GM10248 (cell line): ENCODE measurements at regions of chr9 and their contacts with region 1.

Region 1: DNA sequence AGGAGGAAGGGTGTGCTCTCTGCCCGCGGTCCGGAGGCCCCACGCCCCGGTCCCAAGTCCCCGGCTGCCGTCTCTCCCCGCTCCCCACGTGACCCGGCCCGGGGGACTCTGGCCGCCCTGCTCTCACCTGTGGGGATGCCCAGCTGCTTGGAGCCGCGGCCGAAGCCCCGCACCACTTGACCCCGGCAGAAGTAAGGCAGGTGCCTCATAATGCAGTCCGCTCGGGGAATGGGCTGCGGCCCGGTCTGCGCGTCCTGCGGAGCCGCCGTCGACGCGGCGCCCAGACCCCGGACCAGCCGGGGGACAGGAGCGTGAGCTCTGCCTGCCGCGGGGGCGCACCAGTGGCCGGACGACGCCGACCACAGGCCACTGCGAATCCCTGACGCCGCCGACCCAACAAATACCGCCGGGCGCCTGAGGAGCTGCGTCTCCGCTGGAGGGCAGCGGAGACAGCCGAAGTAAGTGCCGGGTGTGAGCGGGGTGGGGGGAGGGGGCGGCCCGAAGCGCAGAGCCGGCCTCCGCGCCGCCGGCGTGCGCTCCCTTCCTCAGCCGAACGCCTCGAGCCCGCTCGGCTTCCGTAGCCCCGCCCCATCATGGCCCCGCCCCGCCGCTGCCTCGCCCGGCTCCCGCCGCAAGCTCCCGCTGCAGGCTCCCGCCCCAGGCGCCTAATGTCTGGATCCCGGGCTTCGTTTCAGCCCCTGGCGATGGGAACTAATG is at the start of gene RFK:
- DNase-seq: peak; percentile 95
- CTCF ChIP-seq: peak; percentile 67

Region 2: DNA sequence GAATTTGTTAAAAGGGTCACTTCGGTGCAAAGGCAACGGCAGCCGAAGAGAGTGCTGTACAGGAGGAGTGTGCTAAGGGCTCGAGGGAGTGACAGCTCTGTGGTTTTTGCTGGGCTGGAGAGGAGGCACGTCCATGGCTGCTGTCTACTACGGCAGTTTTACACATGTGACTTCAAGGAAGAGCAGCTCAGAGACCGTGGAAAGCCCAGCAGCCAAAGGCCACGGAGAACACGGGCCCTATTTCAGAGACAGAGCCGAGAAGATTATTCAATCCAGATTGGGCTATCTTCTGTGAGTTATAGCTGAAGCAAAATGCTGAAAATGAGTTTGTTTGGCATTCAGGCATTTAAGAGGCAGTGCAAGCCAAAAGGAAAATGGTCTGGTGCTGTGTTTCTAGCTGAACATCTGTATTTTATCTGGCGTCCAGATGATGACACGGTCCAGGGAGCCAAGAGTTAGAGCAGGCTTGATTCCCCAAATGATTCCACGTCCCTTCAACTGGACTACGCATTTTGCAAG is 96.3 kb before region 1 on chr9:
- CTCF ChIA-PET with region 1: no interaction called
- POLR2A ChIA-PET with region 1: no interaction called
- DNase-seq: no peak
- CTCF ChIP-seq: no peak

Region 3: DNA sequence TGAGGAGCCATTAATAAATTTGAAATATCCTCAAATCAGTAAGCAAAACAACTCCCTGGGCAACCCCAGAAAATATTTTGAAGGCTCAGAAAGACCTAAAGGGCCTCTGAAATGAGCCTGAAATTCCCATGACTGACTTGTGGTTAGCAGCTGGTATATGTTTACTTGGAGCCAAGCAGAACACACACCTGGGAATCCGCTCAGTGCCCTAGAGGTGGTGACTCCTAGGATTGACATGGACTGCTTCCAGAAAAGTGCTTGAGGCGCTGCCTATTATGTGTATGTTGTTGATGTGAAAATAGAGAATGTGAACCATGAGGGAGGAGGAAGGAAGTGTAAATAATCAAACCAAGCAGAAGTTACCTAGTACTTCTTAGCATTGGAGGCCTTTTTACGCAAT is 14.6 kb before region 1 on chr9:
- CTCF ChIA-PET with region 1: interaction called, 28 read pairs
- POLR2A ChIA-PET with region 1: interaction called, 7 read pairs
- DNase-seq: no peak
- CTCF ChIP-seq: no peak